Caco-2 (cell line): ENCODE measurements at regions of chr5 and their contacts with region 1.

Region 1: DNA sequence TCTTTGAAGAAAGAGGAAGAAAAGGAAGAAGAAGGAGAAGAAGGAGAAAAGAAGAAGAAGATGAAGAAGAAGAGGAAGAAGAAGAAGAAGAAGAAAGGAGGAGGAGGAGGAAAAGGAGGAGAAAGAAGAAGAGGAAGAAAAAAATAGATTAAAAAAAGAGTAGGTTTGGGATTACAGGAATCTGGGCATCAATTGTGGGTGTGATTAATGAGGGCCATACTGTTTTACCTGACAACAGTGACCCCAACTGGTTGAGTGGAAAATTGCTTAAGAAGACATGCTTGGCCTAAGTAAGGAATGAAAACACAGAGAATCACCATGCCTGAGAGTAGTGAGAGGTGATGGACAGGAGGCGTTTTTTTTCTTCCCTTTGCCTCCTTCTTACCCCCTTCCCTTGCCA is 114.6 kb downstream of the FAM170A start:
- DNase-seq: peak in 1 of 2 experiments; percentile 66
- H3K4me3 ChIP-seq: no peak overlapping the region
- H3K4me3 Mint-ChIP-seq: no peak overlapping the region
- H3K27ac Mint-ChIP-seq: no peak overlapping the region
- H3K4me1 ChIP-seq: no peaks in the 10 kb centered on the region
- H3K4me1 Mint-ChIP-seq: no peaks in the 10 kb centered on the region
- H3K27me3 ChIP-seq: no peaks in the 10 kb centered on the region
- H3K27me3 Mint-ChIP-seq: peaks cover 3% of the 10 kb centered on the region
- CTCF ChIP-seq: peak; percentile 61 to 65

Region 2: GRCh38 chr5:119340597-119341218 is 403.2 kb before region 1 on chr5:
- CTCF ChIA-PET with region 1: no interaction called
- POLR2A ChIA-PET with region 1: no interaction called
- intact Hi-C with region 1: loop called (anchors 10 kb)
- DNase-seq: no peak
- H3K4me3 ChIP-seq: no peak overlapping the region
- H3K4me3 Mint-ChIP-seq: no peak overlapping the region
- H3K27ac Mint-ChIP-seq: no peak overlapping the region
- H3K4me1 ChIP-seq: peaks cover 7% of the 10 kb centered on the region
- H3K4me1 Mint-ChIP-seq: peaks cover 8% of the 10 kb centered on the region
- H3K27me3 ChIP-seq: no peaks in the 10 kb centered on the region
- H3K27me3 Mint-ChIP-seq: no peaks in the 10 kb centered on the region
- CTCF ChIP-seq: no peak

Region 3: GRCh38 chr5:119578937-119579336 is 165.0 kb before region 1 on chr5:
- CTCF ChIA-PET with region 1: no interaction called
- POLR2A ChIA-PET with region 1: no interaction called
- intact Hi-C with region 1: loop called (anchors 1 kb)
- DNase-seq: peak; percentile 55 to 68
- H3K4me3 ChIP-seq: no peak overlapping the region
- H3K4me3 Mint-ChIP-seq: no peak overlapping the region
- H3K27ac Mint-ChIP-seq: no peak overlapping the region
- H3K4me1 ChIP-seq: no peaks in the 10 kb centered on the region
- H3K4me1 Mint-ChIP-seq: peaks cover 21% of the 10 kb centered on the region
- H3K27me3 ChIP-seq: no peaks in the 10 kb centered on the region; the same call in 1 of the 2 replicates
- H3K27me3 Mint-ChIP-seq: no peaks in the 10 kb centered on the region
- CTCF ChIP-seq: peak; percentile 18 to 41